ENCODE measurements at regions of chr9 and their contacts with region 1.

Region 1: GRCh38 chr9:114930056-114930812 is at the start of gene TNFSF8:
- DNase-seq: peak in 1 of 2 donors; percentile 43
- ATAC-seq: no peak
- total RNA-seq, gene TNFSF8: 0.24 to 1.0 TPM

Region 2: GRCh38 chr9:114754581-114754980 is 175.7 kb before region 1 on chr9:
- intact Hi-C with region 1: no loop called
- DNase-seq: no peak
- ATAC-seq: no peak

Region 3: DNA sequence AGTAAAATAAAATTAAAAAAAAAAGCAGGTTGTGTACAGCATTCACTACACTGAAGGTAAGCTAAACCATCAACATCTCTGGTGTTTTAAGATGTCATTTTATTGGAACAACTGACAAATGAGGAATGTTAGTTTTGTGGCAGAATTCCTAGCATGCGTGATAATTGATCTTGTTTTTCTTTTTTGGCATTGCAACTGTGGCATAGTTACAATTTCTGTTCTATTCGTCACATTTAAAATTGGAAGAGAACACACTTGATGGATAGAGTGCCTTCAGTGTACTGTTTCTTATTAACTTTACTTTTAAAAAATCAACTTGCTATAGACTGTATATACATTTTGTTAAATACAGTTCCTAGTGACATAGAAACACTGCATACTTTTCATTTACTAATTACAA is 80.8 kb before region 1 on chr9:
- intact Hi-C with region 1: no loop called
- DNase-seq: no peak
- ATAC-seq: no peak

Region 4: GRCh38 chr9:114989600-114990410 is 59.6 kb after region 1 on chr9:
- intact Hi-C with region 1: loop called in 1 of 2 experiments (anchors 10 kb)
- DNase-seq: no peak
- ATAC-seq: no peak